ENCODE measurements at regions of chr16 and their contacts with region 1.

Region 1: DNA sequence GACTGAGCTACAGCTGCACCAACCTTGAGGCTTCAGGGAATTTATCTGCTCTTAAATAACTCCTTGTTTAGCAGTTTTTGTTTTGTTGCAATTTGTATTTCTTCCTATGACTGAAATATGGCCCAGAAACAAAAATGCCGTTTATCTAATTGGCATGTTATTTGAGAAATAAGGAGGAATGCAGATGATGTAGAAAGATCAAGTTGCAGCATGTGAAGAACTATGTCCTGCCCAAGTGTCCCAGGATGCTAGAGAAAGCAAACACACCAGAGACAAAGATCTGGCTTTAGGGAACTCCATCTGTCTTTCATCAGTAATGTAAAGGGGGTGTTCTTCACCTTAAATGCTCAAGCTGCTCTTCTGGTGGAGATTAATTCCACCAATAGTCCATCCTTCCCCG is 29.7 kb downstream of the USP31 start:
- DNase-seq: no peak
- ATAC-seq: no peak
- H3K4me3 ChIP-seq: no peak overlapping the region
- H3K27ac ChIP-seq: no peak overlapping the region
- H3K4me1 ChIP-seq: no peaks in the 10 kb centered on the region
- H3K27me3 ChIP-seq: no peaks in the 10 kb centered on the region
- CTCF ChIP-seq: no peak
- EP300 ChIP-seq: no peak
- POLR2A ChIP-seq: no peak
- RAD21 ChIP-seq: no peak

Region 2: DNA sequence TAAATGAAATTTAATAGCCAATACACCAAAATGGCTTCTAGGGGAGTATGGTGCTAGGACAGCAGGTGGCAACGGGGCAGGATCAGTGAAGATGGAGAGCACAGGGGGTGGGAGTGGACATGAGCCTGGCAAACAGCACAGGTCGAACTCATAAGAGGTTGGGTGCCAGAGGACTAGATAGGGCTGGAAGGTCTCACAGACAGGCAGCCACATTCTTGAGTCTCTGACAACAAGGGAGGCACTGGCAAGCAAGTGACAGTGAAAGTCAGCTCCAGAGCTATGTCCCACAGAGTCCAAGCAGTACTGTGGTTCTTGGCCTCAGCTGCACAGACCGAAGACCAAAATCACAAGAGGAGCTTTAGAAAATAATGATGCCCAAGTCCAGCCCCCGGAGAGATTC is 31.6 kb before region 1 on chr16:
- CTCF ChIA-PET with region 1: no interaction called
- POLR2A ChIA-PET with region 1: no interaction called
- RAD21 ChIA-PET with region 1: no interaction called
- SMC1A ChIA-PET with region 1: no interaction called
- in situ Hi-C with region 1: no loop called
- intact Hi-C with region 1: no loop called
- DNase-seq: no peak
- ATAC-seq: no peak
- H3K4me3 ChIP-seq: no peak overlapping the region
- H3K27ac ChIP-seq: no peak overlapping the region
- H3K4me1 ChIP-seq: no peaks in the 10 kb centered on the region
- H3K27me3 ChIP-seq: no peaks in the 10 kb centered on the region
- CTCF ChIP-seq: no peak
- EP300 ChIP-seq: no peak
- POLR2A ChIP-seq: no peak
- RAD21 ChIP-seq: no peak

Region 3: GRCh38 chr16:23174622-23175021 is 55.1 kb after region 1 on chr16:
- CTCF ChIA-PET with region 1: no interaction called
- POLR2A ChIA-PET with region 1: no interaction called
- RAD21 ChIA-PET with region 1: no interaction called
- SMC1A ChIA-PET with region 1: no interaction called
- in situ Hi-C with region 1: no loop called
- intact Hi-C with region 1: loop called (anchors 10 kb)
- DNase-seq: no peak
- ATAC-seq: no peak
- H3K4me3 ChIP-seq: no peak overlapping the region
- H3K27ac ChIP-seq: no peak overlapping the region
- H3K4me1 ChIP-seq: no peaks in the 10 kb centered on the region
- H3K27me3 ChIP-seq: no peaks in the 10 kb centered on the region; a peak in 1 of 4 replicates
- CTCF ChIP-seq: no peak
- EP300 ChIP-seq: no peak
- POLR2A ChIP-seq: no peak
- RAD21 ChIP-seq: no peak

Region 4: DNA sequence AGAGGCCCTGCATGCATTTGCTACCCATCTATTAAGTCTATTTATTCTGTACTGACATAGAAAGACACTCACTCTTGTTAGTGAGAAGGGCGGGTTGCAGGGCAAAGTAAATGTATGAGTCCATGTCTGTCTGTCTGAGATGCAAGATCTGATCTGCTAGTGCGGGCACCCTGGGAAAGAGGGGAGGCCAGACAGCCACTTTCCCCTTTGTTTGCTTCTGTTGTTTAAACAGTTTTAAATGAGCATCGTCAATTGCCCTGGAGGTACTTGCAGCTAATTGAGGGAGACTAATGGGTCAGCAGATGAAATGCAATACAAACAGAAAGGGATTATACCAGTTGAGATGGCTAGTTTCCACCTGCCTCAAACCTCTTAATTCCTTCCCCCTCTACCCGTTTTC is 87.9 kb after region 1 on chr16:
- CTCF ChIA-PET with region 1: no interaction called
- POLR2A ChIA-PET with region 1: no interaction called
- RAD21 ChIA-PET with region 1: no interaction called
- SMC1A ChIA-PET with region 1: no interaction called
- in situ Hi-C with region 1: no loop called
- intact Hi-C with region 1: no loop called
- DNase-seq: no peak
- ATAC-seq: no peak
- H3K4me3 ChIP-seq: no peak overlapping the region
- H3K27ac ChIP-seq: no peak overlapping the region
- H3K4me1 ChIP-seq: no peaks in the 10 kb centered on the region
- H3K27me3 ChIP-seq: no peaks in the 10 kb centered on the region
- CTCF ChIP-seq: no peak
- EP300 ChIP-seq: no peak
- POLR2A ChIP-seq: no peak
- RAD21 ChIP-seq: no peak